ENCODE measurements at regions of chr19 and their contacts with region 1.

Region 1: GRCh38 chr19:18895038-18895823 is 727 bp downstream of the CERS1 start:
- DNase-seq: peak; percentile 95
- H3K4me3 ChIP-seq: peak overlapping the region; percentile 61 to 72
- H3K27ac ChIP-seq: peak overlapping the region in 1 of 2 experiments; percentile 65; a peak in 1 of 4 replicates
- H3K4me1 ChIP-seq: peaks cover 0 to 24% of the 10 kb centered on the region in 2 experiments; a peak in 1 of 4 replicates
- H3K27me3 ChIP-seq: no peaks in the 10 kb centered on the region
- CTCF ChIP-seq: peak; percentile 53
- EP300 ChIP-seq: no peak
- RAD21 ChIP-seq: peak; percentile 71

Region 2: DNA sequence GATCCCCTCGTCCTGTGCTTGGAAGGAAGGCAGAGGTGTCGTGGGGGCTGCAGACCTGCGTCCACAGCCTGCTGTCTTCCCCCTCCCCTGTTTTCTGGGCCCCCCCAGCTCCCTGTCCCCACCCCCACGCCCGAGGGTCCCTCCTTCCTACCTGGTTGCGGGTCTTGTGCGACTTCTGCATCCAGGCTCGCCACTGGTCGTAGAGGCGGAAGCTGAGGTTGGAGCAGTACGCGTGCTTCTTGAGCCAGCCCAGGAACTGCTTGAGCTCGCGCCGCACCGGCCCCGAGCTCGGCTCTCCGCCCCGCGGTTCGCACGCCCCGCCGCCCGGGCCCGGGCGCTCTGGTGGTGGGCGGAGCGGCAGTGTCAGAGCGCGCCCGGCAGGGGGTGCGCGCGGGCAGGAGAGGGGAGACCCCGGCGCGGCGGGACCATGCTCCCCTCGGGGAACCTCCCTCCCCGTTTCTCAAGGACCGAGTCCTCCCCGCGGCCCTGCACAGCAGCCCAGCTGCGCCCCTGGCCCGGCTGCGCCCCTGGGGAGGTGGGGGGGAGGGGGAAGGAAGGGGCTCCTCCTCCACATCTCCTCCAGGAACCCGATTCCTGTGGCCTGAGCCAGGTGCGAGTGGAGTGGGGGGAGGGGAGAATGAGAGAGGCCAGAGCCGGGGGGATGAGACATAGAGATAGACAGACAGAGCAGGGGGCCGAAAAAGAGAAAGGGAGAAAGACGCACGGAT is 301.0 kb before region 1 on chr19:
- CTCF ChIA-PET with region 1: interaction called, 15 read pairs
- POLR2A ChIA-PET with region 1: no interaction called
- DNase-seq: peak; percentile 96
- H3K4me3 ChIP-seq: peak overlapping the region; percentile 32 to 46; a peak in 3 of 4 replicates
- H3K27ac ChIP-seq: no peak overlapping the region
- H3K4me1 ChIP-seq: peaks cover 6 to 36% of the 10 kb centered on the region in 2 experiments; a peak in 2 of 4 replicates
- H3K27me3 ChIP-seq: no peaks in the 10 kb centered on the region
- CTCF ChIP-seq: peak; percentile 75
- EP300 ChIP-seq: no peak
- RAD21 ChIP-seq: peak; percentile 75

Region 3: GRCh38 chr19:18742838-18743783 is 152.1 kb before region 1 on chr19:
- CTCF ChIA-PET with region 1: no interaction called
- POLR2A ChIA-PET with region 1: no interaction called
- DNase-seq: peak; percentile 92
- H3K4me3 ChIP-seq: no peak overlapping the region
- H3K27ac ChIP-seq: peak overlapping the region in 1 of 2 experiments; percentile 96; a peak in 2 of 4 replicates
- H3K4me1 ChIP-seq: peaks cover 0 to 67% of the 10 kb centered on the region in 2 experiments; a peak in 1 of 4 replicates
- H3K27me3 ChIP-seq: no peaks in the 10 kb centered on the region
- CTCF ChIP-seq: no peak
- EP300 ChIP-seq: peak in 1 of 2 experiments; percentile 80; a peak in 2 of 4 replicates
- RAD21 ChIP-seq: peak; percentile 35

Region 4: DNA sequence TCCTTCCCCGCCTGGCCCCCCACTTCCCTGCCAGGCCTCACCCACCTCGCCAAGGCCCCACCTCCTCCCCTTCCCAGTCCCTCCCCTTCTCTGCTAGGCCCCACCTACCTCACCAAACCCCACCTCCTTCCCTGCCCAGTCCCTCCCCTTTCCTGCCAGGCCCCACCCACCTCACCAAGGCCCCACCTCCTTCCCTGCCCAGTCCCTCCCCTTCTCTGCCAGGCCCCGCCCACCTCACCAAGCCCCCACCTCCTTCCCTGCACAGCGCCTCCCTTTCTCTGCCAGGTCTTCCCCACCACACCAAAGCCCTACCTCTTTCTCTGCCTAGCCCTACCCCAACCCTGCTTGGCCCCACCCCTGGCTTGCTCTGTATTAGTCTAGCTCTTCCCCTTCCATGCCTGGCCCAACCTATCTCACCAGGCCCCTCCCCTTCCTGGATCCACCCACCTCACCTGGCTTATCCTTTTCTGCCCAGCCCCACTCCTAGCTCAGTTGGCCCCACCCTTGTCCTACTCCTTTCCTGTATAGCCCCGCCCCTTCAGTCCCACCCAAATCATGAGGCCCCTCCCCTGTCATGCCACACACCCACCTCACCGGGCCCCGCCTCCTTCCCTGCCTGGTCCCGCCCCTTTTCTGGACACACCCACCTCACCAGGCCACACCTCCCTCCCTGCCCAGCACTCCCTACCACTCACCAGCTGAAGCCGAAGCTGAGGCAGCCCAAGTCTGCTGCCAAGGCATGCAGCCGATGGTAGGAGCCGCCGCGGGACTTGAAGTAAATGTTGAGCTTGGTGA is 15.5 kb before region 1 on chr19:
- CTCF ChIA-PET with region 1: interaction called, 23 read pairs
- POLR2A ChIA-PET with region 1: no interaction called
- DNase-seq: peak; percentile 88
- H3K4me3 ChIP-seq: no peak overlapping the region
- H3K27ac ChIP-seq: no peak overlapping the region
- H3K4me1 ChIP-seq: no peaks in the 10 kb centered on the region
- H3K27me3 ChIP-seq: no peaks in the 10 kb centered on the region
- CTCF ChIP-seq: no peak
- EP300 ChIP-seq: no peak
- RAD21 ChIP-seq: no peak

Region 5: GRCh38 chr19:18919086-18919899 is 24.1 kb after region 1 on chr19 and contains the starts of genes COPE and DDX49:
- CTCF ChIA-PET with region 1: interaction called, 76 read pairs
- POLR2A ChIA-PET with region 1: interaction called, 8 read pairs
- DNase-seq: peak; percentile 98
- H3K4me3 ChIP-seq: peak within 1 kb of the TSS; percentile 89 to 92
- H3K27ac ChIP-seq: peak within 1 kb of the TSS; percentile 74 to 92
- H3K4me1 ChIP-seq: peaks cover 5 to 12% of the 10 kb centered on the region in 2 experiments; a peak in 2 of 4 replicates
- H3K27me3 ChIP-seq: no peaks in the 10 kb centered on the region
- CTCF ChIP-seq: no peak
- EP300 ChIP-seq: no peak
- RAD21 ChIP-seq: no peak
- polyA plus RNA-seq, gene COPE: 412 and 450 TPM in 2 replicates
- polyA plus RNA-seq, gene DDX49: 81.7 and 86.8 TPM in 2 replicates

Region 6: DNA sequence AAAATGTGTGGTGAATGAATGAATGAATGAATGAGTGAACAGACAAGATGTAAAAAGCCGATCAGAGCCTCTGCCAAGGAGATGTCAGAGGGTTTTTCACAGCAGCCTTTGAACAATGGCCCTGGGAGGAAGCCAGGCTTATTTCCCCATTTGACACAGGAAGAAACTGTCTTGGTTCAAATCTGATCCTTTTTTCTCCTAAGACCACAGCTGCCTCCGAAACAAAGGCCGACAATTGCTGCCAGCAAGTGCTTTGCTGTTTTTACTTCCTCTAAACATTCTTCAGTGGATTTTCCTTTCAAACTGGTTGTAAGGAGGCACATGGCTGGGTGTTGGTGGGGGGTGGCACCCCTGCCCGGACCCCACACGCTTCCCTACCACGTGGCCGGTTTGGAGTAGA is 90.0 kb after region 1 on chr19:
- CTCF ChIA-PET with region 1: interaction called, 45 read pairs
- POLR2A ChIA-PET with region 1: interaction called, 3 read pairs
- DNase-seq: no peak
- H3K4me3 ChIP-seq: no peak overlapping the region
- H3K27ac ChIP-seq: no peak overlapping the region
- H3K4me1 ChIP-seq: no peaks in the 10 kb centered on the region
- H3K27me3 ChIP-seq: no peaks in the 10 kb centered on the region; the same call in 1 of the 2 replicates
- CTCF ChIP-seq: no peak
- EP300 ChIP-seq: no peak
- RAD21 ChIP-seq: no peak